MCF 10A (cell line): ENCODE measurements at regions of chr4 and their contacts with region 1.

Region 1: GRCh38 chr4:145936142-145936996 is 2.3 kb downstream of the ZNF827 start:
- DNase-seq: peak; percentile 70
- H3K4me3 Mint-ChIP-seq: peak overlapping the region; percentile 88
- H3K27ac Mint-ChIP-seq: peak overlapping the region; percentile 42
- H3K4me1 Mint-ChIP-seq: peaks cover 38% of the 10 kb centered on the region
- H3K27me3 Mint-ChIP-seq: no peaks in the 10 kb centered on the region
- CTCF ChIP-seq: peak; percentile 8

Region 2: GRCh38 chr4:145808021-145808650 is 128.2 kb before region 1 on chr4:
- CTCF ChIA-PET with region 1: interaction called, 4 read pairs
- POLR2A ChIA-PET with region 1: interaction called, 6 read pairs
- intact Hi-C with region 1: loop called (anchors 2 kb)
- DNase-seq: peak; percentile 97
- H3K4me3 Mint-ChIP-seq: peak overlapping the region; percentile 41
- H3K27ac Mint-ChIP-seq: peak overlapping the region; percentile 95
- H3K4me1 Mint-ChIP-seq: peaks cover 32% of the 10 kb centered on the region
- H3K27me3 Mint-ChIP-seq: no peaks in the 10 kb centered on the region
- CTCF ChIP-seq: no peak

Region 3: DNA sequence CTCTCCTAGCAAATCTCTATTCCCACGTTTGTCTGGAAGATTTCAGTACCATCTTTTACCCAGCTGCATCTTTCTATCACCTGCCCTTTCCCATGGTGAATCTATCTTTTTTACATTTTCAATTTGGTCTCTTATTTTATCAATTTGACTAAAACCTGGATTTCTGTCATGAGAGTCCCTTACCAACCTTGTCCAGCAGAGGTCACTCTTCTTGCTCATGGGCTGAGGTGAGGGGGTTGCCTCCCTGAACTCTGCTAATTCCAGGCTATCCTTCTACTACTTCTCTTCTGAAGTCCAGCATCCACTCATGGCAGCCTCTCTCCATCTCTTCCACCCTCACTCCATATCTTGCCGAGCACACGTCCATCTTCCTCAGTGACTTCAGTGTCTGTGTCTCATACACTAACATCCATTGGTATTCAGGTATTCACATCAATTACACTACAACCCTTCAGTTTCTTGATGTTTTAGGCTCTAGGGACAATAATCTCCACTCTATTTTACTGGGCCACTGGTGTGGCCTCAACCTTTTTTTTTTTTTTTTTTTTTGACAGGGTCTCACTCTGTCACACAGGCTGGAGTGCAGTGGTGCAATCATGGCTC is 20.0 kb after region 1 on chr4:
- CTCF ChIA-PET with region 1: interaction called, 3 read pairs
- POLR2A ChIA-PET with region 1: interaction called, 7 read pairs
- intact Hi-C with region 1: loop called (anchors 2 kb)
- DNase-seq: peak; percentile 62
- H3K4me3 Mint-ChIP-seq: no peak overlapping the region
- H3K27ac Mint-ChIP-seq: no peak overlapping the region
- H3K4me1 Mint-ChIP-seq: peaks cover 32% of the 10 kb centered on the region
- H3K27me3 Mint-ChIP-seq: no peaks in the 10 kb centered on the region
- CTCF ChIP-seq: peak; percentile 70

Region 4: GRCh38 chr4:146175541-146176453 is 239.4 kb after region 1 on chr4 and contains the start of gene LSM6:
- CTCF ChIA-PET with region 1: no interaction called
- POLR2A ChIA-PET with region 1: no interaction called
- intact Hi-C with region 1: loop called (anchors 5 kb)
- DNase-seq: peak; percentile 87
- H3K4me3 Mint-ChIP-seq: peak within 1 kb of the TSS; percentile 83
- H3K27ac Mint-ChIP-seq: peak within 1 kb of the TSS; percentile 72
- H3K4me1 Mint-ChIP-seq: peaks cover 18% of the 10 kb centered on the region
- H3K27me3 Mint-ChIP-seq: no peaks in the 10 kb centered on the region
- CTCF ChIP-seq: no peak
- total RNA-seq, gene LSM6: 40.0 and 41.4 TPM in 2 replicates

Region 5: DNA sequence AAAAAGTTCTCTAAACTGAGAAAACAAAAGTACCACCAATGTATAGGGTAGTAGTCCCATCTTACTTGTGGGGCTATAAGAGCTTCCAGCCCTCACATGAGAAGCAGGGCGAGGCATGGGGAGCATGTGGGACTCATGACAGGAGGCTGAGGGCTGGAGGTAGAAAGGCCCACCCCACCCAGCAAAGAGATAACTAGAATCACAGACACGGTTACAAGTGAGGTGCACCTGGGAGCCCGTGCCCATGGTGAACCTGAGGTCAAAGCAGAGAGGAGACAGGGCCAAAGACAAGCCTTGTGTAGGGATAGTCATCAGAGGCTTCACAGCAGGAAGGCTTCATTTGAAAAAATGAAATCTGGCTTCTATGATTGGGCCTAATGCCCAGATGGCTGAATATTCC is 953.9 kb after region 1 on chr4:
- CTCF ChIA-PET with region 1: no interaction called
- POLR2A ChIA-PET with region 1: no interaction called
- intact Hi-C with region 1: no loop called
- DNase-seq: no peak
- H3K4me3 Mint-ChIP-seq: no peak overlapping the region
- H3K27ac Mint-ChIP-seq: no peak overlapping the region
- H3K4me1 Mint-ChIP-seq: no peaks in the 10 kb centered on the region
- H3K27me3 Mint-ChIP-seq: peaks cover 58% of the 10 kb centered on the region
- CTCF ChIP-seq: no peak